ENCODE measurements at regions of chr9 and their contacts with region 1.

Region 1: DNA sequence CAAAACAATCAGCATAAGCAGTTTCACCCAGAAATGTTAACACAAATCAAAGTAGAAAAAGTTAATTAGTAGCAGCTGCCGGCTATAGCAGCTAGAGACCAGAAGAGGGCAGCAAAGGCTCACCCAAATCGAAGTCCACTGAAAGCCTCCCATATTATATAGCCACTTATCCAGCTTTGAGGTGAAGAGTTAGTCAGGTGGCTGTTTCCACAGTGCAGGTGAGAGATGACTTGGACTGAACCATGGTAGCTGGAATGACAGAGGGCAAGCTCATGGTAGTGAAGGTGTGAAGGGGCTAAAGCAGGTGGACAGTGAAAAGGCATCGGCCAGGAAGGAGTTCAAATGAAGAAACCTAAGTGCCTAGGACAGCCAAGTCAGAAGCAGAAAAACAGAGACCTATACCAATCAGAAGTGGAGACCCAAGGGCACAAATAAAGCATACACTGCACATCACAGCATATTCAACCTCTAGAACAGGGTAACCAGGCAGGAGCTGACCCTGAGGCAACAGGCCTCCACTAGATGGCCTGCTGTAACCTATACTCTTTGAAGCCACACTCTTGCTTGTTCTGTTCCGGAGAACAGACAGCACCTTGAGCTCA is 7.2 kb upstream of the RNF38 start:
- DNase-seq: peak; percentile 77
- H3K4me3 Mint-ChIP-seq: no peak overlapping the region
- H3K27ac Mint-ChIP-seq: peak overlapping the region; percentile 30
- H3K4me1 Mint-ChIP-seq: peaks cover 8% of the 10 kb centered on the region
- H3K27me3 Mint-ChIP-seq: no peaks in the 10 kb centered on the region

Region 2: GRCh38 chr9:36218411-36218901 is 188.8 kb before region 1 on chr9:
- CTCF ChIA-PET with region 1: no interaction called
- intact Hi-C with region 1: no loop called
- DNase-seq: no peak
- H3K4me3 Mint-ChIP-seq: no peak overlapping the region
- H3K27ac Mint-ChIP-seq: peak overlapping the region; percentile 26
- H3K4me1 Mint-ChIP-seq: peaks cover 30% of the 10 kb centered on the region
- H3K27me3 Mint-ChIP-seq: no peaks in the 10 kb centered on the region

Region 3: DNA sequence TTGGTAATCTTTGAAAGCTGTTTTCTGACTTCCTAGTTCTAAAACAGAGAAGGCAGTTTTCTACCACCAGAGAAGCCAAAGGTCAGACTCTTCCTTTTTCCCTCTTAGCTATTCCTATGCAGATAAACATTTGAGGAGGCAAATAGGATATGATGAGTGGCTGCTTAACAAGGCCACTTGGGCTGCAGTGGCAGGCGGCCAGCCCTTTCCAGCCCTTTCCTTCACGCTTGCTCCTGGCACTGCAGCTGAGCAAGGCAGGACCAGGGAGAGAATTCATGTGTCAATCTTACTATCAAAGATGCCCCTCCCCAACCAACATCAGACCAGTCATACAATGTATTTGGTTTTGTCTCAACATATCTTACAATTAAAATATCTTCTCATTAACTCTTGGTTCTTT is 29.7 kb after region 1 on chr9:
- CTCF ChIA-PET with region 1: interaction called, 25 read pairs
- intact Hi-C with region 1: no loop called
- DNase-seq: no peak
- H3K4me3 Mint-ChIP-seq: no peak overlapping the region
- H3K27ac Mint-ChIP-seq: no peak overlapping the region
- H3K4me1 Mint-ChIP-seq: peaks cover 31% of the 10 kb centered on the region
- H3K27me3 Mint-ChIP-seq: no peaks in the 10 kb centered on the region

Region 4: GRCh38 chr9:36450110-36450732 is 43.0 kb after region 1 on chr9:
- CTCF ChIA-PET with region 1: interaction called, 45 read pairs
- intact Hi-C with region 1: loop called (anchors 1 kb)
- DNase-seq: peak; percentile 37
- H3K4me3 Mint-ChIP-seq: no peak overlapping the region
- H3K27ac Mint-ChIP-seq: no peak overlapping the region
- H3K4me1 Mint-ChIP-seq: peaks cover 16% of the 10 kb centered on the region
- H3K27me3 Mint-ChIP-seq: no peaks in the 10 kb centered on the region

Region 5: DNA sequence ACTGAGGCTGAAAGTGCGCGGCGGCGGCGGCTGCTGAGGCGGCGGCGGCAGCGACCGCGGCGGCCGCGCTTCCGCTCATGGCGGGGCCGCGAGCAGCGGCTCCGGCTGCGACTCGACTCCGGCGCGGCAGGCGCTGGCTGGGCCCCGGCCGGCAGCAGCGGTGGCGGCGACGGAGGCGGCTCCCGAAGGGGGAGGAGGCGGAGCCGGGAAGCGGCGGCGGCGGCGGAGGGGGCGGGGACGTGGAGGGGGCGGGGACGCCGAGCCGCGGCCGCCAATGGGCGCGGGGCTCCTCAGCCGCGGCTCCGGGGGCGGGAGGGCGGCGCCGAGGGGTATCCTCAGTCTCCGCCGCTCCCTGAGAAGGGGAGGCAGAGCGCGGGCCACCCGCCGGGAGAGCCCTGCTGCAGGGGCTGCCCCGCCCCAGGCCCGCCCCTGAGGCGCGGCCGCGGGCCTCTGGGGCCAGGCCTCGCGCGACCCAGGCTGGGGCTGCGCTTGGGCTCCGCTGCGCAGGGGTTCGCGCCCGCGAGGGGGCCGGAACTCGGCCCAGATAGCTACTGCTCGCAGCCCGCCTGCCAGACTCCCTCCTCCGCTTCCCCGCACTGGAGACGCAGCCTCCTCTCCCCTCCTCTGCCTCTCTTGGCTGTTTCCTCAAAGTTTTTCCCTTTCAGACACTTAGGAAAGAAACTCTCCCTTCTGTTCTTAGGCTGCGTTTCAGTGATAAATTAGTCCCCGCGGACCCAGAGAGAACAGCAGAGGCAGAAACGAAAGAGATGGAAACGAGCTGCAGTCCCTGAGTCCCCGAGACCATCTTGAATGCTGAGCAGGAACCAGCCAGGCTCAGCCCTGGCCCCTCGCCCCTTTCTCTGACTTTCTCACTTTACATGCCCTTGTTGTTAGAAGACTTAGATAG is 80.5 kb after region 1 on chr9:
- CTCF ChIA-PET with region 1: interaction called, 10 read pairs
- intact Hi-C with region 1: no loop called
- DNase-seq: peak; percentile 87
- H3K4me3 Mint-ChIP-seq: peak overlapping the region; percentile 90
- H3K27ac Mint-ChIP-seq: peak overlapping the region; percentile 98
- H3K4me1 Mint-ChIP-seq: peaks cover 61% of the 10 kb centered on the region
- H3K27me3 Mint-ChIP-seq: no peaks in the 10 kb centered on the region

Region 6: DNA sequence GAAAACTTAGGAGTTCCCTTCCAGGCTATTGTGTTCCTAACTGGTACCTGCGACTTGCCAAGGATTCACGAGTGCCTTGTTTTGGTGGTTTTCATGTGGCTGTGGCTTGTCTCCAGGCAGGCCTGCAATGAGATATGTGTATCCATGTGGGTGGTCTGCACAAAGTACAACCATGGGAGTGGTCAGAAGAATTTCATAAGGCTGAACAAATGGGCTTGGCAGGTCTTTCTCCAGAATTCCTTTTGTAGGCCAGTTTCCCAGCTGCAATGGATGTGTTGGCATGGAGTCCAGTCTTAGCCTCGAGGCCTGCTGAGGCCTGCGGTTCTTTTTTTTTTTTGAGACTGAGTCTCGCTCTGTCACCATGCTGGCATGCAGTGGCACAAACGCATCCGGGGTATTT is 136.7 kb after region 1 on chr9:
- CTCF ChIA-PET with region 1: interaction called, 238 read pairs
- intact Hi-C with region 1: no loop called
- DNase-seq: no peak
- H3K4me3 Mint-ChIP-seq: no peak overlapping the region
- H3K27ac Mint-ChIP-seq: no peak overlapping the region
- H3K4me1 Mint-ChIP-seq: no peaks in the 10 kb centered on the region
- H3K27me3 Mint-ChIP-seq: no peaks in the 10 kb centered on the region

Region 7: GRCh38 chr9:36560857-36561221 is 153.6 kb after region 1 on chr9:
- CTCF ChIA-PET with region 1: interaction called, 238 read pairs
- intact Hi-C with region 1: no loop called
- DNase-seq: no peak
- H3K4me3 Mint-ChIP-seq: no peak overlapping the region
- H3K27ac Mint-ChIP-seq: no peak overlapping the region
- H3K4me1 Mint-ChIP-seq: no peaks in the 10 kb centered on the region
- H3K27me3 Mint-ChIP-seq: no peaks in the 10 kb centered on the region

Region 8: GRCh38 chr9:36855448-36856315 is 448.5 kb after region 1 on chr9:
- CTCF ChIA-PET with region 1: no interaction called
- intact Hi-C with region 1: loop called (anchors 1 kb)
- DNase-seq: peak; percentile 61
- H3K4me3 Mint-ChIP-seq: no peak overlapping the region
- H3K27ac Mint-ChIP-seq: no peak overlapping the region
- H3K4me1 Mint-ChIP-seq: peaks cover 3% of the 10 kb centered on the region
- H3K27me3 Mint-ChIP-seq: no peaks in the 10 kb centered on the region

Region 9: GRCh38 chr9:36924071-36924470 is 516.8 kb after region 1 on chr9:
- CTCF ChIA-PET with region 1: no interaction called
- intact Hi-C with region 1: no loop called
- DNase-seq: peak; percentile 58
- H3K4me3 Mint-ChIP-seq: no peak overlapping the region
- H3K27ac Mint-ChIP-seq: peak overlapping the region; percentile 31
- H3K4me1 Mint-ChIP-seq: peaks cover 27% of the 10 kb centered on the region
- H3K27me3 Mint-ChIP-seq: peaks cover 16% of the 10 kb centered on the region

Measured in activated naive CD4-positive, alpha-beta T cell treated with anti-CD3 and anti-CD28 coated beads for 36 hours (primary cell).